Mammary epithelial cell (primary cell): ENCODE measurements at regions of chr18 and their contacts with region 1.

Region 1: GRCh38 chr18:3281456-3282400 is 19.8 kb downstream of the MYL12B start:
- DNase-seq: peak; percentile 68
- H3K4me3 ChIP-seq: no peak overlapping the region
- H3K27ac ChIP-seq: no peak overlapping the region
- H3K4me1 ChIP-seq: no peaks in the 10 kb centered on the region
- H3K27me3 ChIP-seq: no peaks in the 10 kb centered on the region
- CTCF ChIP-seq: peak; percentile 36 to 53

Region 2: DNA sequence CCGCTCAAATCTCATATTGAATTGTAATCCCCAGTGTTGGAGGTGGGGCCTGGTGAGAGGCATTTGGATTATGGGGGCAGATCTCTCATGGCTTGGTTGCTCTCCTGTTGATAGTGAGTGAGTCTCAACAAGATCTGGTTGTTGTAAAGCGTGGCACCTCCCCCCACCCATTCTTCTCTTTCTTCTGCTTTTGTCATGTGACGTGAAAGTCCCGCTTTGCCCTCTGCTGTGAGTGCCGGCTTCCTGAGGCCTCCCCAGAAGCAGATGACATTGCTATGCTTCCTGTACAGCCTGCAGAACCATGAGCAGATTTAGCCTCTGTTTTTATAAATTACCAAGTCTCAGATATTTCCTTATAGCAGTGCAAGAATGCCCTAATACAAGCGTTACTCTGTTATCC is 1703.2 kb before region 1 on chr18:
- CTCF ChIA-PET with region 1: no interaction called
- dilution Hi-C with region 1: no loop called
- in situ Hi-C with region 1: no loop called
- intact Hi-C with region 1: no loop called
- DNase-seq: no peak
- H3K4me3 ChIP-seq: no peak overlapping the region
- H3K27ac ChIP-seq: no peak overlapping the region
- H3K4me1 ChIP-seq: no peaks in the 10 kb centered on the region
- H3K27me3 ChIP-seq: no peaks in the 10 kb centered on the region
- CTCF ChIP-seq: no peak

Region 3: GRCh38 chr18:3454365-3455089 is 172.8 kb after region 1 on chr18:
- CTCF ChIA-PET with region 1: interaction called, 8 read pairs
- dilution Hi-C with region 1: no loop called
- in situ Hi-C with region 1: no loop called
- intact Hi-C with region 1: loop called (anchors 1 kb)
- DNase-seq: peak; percentile 46
- H3K4me3 ChIP-seq: peak overlapping the region; percentile 48 to 91 (median 75)
- H3K27ac ChIP-seq: peak overlapping the region; percentile 97
- H3K4me1 ChIP-seq: peaks cover 41% of the 10 kb centered on the region
- H3K27me3 ChIP-seq: no peaks in the 10 kb centered on the region
- CTCF ChIP-seq: peak; percentile 60 to 63

Region 4: DNA sequence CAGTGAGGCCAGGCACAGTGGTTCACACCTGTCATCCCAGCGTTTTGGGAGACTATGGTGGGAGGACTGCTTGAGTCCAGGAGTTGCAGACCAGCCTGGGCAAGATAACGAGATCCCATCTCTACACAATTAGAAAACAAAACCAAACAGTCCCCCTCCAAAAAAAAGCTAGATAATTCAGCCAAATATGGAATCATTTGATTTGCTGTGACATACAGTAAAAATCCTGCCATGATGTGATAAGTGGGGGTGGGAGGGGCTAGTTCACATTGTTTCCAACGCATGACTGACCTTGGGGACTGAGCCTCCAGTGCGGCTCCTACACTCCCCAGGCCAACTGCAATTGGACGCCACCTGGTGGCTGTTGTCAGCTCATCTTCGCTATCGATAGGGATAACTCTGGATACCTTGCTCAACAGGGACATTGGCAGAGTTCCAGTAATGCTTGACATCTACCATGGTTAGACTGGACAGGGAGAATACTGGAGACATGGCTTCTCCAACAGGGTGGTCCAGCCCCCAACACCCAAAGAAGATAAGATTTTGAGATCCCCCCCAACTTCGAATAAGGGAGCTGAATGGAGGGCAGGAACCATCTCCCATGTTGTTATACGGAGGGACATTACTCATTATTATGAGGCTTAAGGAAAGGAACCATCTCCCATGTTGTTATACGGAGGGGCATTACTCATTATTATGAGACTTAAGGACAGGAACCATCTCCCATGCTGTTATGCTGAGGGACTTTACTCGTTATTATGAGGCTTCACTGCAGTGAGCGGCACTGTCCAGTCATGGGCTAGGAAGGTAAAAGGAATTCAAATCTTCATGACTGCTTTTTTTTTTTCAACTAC is 304.2 kb after region 1 on chr18:
- CTCF ChIA-PET with region 1: interaction called, 12 read pairs
- dilution Hi-C with region 1: no loop called
- in situ Hi-C with region 1: no loop called
- intact Hi-C with region 1: loop called (anchors 2 kb)
- DNase-seq: peak; percentile 61
- H3K4me3 ChIP-seq: no peak overlapping the region
- H3K27ac ChIP-seq: no peak overlapping the region
- H3K4me1 ChIP-seq: peaks cover 9% of the 10 kb centered on the region
- H3K27me3 ChIP-seq: no peaks in the 10 kb centered on the region
- CTCF ChIP-seq: peak; percentile 86 to 90

Region 5: GRCh38 chr18:3771121-3771971 is 489.6 kb after region 1 on chr18:
- CTCF ChIA-PET with region 1: no interaction called
- dilution Hi-C with region 1: no loop called
- in situ Hi-C with region 1: no loop called
- intact Hi-C with region 1: loop called (anchors 1 kb)
- DNase-seq: peak; percentile 83
- H3K4me3 ChIP-seq: peak overlapping the region in 2 of 3 experiments; percentile 27 to 39
- H3K27ac ChIP-seq: peak overlapping the region; percentile 47
- H3K4me1 ChIP-seq: peaks cover 5% of the 10 kb centered on the region
- H3K27me3 ChIP-seq: no peaks in the 10 kb centered on the region
- CTCF ChIP-seq: peak; percentile 67 to 93

Region 6: DNA sequence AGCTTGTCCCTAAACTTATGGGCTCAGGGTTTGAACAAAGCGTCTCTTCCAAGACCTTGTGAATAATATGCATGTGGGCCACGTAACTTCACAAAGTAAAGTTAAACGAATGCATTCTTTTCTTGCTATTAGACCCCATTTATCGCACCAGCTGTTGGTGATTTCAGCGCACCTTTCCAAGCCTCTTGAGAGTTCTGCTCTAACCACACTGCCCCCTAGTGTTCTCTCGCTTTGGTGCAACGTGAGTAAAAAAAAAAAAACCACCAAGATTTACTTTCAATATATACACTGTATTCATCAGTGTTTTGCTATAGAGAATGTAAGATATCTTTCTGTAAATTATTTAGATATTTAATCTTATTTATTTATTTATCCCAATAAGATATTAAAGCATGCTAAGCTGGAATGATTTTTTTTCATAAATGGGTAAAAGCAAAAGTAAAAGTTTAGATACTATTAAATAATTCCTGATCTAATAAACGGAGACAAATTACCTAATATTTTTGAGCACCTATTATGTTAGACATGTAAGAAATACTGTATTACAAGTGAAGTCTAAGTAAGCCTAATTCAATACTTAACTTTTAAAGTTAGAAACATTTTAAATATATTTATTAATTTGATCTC is 713.9 kb after region 1 on chr18:
- CTCF ChIA-PET with region 1: no interaction called
- dilution Hi-C with region 1: loop called (anchors 25 kb)
- in situ Hi-C with region 1: loop called (anchors 25 kb)
- intact Hi-C with region 1: loop called (anchors 5 kb)
- DNase-seq: peak; percentile 55
- H3K4me3 ChIP-seq: peak overlapping the region in 2 of 3 experiments; percentile 3 to 22
- H3K27ac ChIP-seq: no peak overlapping the region
- H3K4me1 ChIP-seq: peaks cover 5% of the 10 kb centered on the region
- H3K27me3 ChIP-seq: no peaks in the 10 kb centered on the region
- CTCF ChIP-seq: peak; percentile 87 to 92